Naive thymus-derived CD4-positive, alpha-beta T cell (primary cell): ENCODE measurements at regions of chr6 and their contacts with region 1.

Region 1: DNA sequence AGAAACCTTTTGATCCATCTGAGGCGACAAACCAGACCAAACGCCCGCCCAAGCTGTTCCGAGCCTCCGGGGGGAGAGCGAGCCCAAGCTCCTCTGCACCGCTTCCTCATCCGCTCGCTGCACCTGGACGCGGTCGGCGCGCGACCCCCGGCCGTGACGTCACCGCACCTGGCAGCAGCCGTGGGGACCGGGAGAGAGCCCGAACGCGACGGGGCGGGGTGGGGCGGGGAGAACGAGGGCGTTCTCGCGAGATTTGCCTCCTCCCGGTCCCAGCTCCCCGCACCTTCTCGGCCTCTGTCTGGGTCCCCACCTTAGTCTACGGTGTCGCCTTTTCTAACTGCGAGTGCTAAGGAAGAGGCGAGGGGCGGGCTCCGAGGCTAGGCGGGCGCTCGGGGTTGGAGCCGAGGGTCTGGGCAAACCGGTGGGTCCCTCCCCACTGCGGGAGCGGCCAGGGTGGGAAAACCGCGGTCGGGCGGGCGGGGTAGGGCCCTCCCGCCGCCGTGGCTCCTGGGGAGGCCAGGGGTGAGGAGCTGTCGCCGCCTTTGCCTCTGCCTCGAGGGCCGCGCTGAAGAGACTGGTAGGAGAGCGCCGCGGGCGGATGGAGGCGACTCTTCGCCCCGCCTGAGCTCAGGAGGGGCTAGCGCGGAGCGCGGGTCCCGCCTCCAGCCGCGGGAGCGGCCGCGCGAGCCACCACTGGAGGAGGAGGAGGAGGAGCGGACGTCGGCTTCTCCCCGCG is at the start of gene CD2AP:
- DNase-seq: peak; percentile 72 to 91 (median 88)
- ATAC-seq: peak; percentile 90
- H3K4me3 ChIP-seq: peak within 1 kb of the TSS; percentile 82
- H3K4me3 Mint-ChIP-seq: peak within 1 kb of the TSS; percentile 95 to 100 (median 98)
- H3K27ac ChIP-seq: peak within 1 kb of the TSS; percentile 92
- H3K27ac Mint-ChIP-seq: peak within 1 kb of the TSS; percentile 96 to 100 (median 98)
- H3K4me1 ChIP-seq: peaks cover 11 to 19% of the 10 kb centered on the region in 2 donors
- H3K4me1 Mint-ChIP-seq: peaks cover 23 to 55% (median 47%) of the 10 kb centered on the region in 7 donors
- H3K27me3 ChIP-seq: no peaks in the 10 kb centered on the region
- H3K27me3 Mint-ChIP-seq: peaks cover 0 to 3% (median 0%) of the 10 kb centered on the region in 5 donors
- total RNA-seq, gene CD2AP: 21.8 to 37.0 (median 27.9) TPM

Region 2: DNA sequence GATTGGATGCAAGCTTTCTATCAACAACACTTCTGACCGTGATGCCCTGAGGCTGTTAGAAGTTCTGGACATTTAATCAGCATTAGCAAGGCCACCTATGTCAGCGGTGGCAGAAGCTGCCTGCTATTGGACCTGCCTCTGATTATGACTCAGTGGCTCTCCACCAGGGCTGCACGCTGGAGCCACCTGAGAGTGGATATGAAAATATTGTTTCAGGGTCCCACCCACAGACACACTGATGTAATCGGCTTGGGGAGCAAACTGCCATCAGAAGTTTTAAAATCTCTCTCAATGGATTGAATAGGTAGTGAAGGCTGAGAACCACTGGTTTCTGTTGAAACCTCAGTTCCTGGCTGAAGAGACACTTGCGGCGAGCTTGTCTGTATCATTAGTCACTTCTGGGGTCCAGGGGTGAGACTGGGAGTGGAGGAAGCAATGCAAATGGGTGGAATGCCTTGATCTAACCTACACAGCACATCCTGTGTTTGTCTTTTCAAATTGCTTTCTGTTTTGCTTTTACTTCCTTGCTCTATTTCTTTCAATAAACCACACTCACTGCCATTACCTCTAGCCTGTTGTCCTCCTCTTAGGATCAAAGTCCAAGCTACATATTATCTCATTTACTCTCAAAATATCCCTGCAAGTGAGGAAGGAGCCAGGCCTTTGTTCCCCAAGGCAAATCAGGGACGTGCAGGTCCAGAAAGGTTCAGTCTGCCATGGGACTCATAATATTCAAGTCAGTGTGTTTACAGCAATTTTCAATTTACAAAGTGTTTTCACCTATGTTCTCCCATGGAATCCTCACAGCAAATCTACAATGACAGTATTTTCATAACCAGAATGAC is 1466.2 kb before region 1 on chr6:
- CTCF ChIA-PET with region 1: no interaction called
- POLR2A ChIA-PET with region 1: no interaction called
- intact Hi-C with region 1: loop called in 1 of 2 experiments (anchors 5 kb)
- DNase-seq: peak in 8 of 9 donors; percentile 35 to 69 (median 58)
- ATAC-seq: peak; percentile 88
- H3K4me3 ChIP-seq: peak overlapping the region; percentile 45
- H3K4me3 Mint-ChIP-seq: peak overlapping the region; percentile 68 to 82 (median 78)
- H3K27ac ChIP-seq: peak overlapping the region; percentile 64
- H3K27ac Mint-ChIP-seq: peak overlapping the region; percentile 85 to 98 (median 92)
- H3K4me1 ChIP-seq: peaks cover 37 to 43% of the 10 kb centered on the region in 2 donors
- H3K4me1 Mint-ChIP-seq: peaks cover 37 to 62% (median 60%) of the 10 kb centered on the region in 7 donors
- H3K27me3 ChIP-seq: no peaks in the 10 kb centered on the region
- H3K27me3 Mint-ChIP-seq: peaks cover 0 to 14% (median 1%) of the 10 kb centered on the region in 5 donors

Region 3: DNA sequence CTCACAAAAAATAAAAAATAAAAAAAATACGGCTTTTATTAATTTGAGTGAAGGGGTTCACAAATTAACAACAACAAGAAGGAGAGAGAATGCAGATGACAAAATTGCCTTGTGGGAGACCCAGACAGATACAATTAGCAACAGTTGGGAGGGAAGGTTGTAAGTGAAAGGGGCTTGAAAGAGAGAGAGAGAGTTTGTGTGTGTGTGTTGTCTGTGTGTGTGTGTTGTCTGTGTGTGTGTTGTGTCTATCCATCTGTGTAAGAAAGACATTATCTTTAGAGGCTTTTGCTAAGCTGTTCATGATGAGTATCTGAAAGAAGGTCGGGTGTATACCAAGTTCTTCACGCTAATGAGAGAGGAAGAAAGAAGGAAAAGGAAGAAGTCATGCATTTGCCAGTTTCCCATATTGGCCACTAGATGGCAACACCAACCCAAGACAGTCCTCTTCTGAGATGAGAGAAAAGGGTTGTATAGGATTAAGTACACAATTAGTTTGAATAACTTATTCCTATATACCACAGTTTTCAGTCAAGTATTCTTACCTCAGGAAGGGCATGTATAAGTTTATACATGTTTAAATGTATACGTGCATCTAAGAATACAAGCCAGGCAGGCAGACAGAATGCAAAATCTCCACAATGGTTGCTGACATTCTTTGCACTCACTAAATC is 63.8 kb before region 1 on chr6:
- CTCF ChIA-PET with region 1: interaction called, 11 read pairs
- POLR2A ChIA-PET with region 1: interaction called, 19 read pairs
- intact Hi-C with region 1: loop called (anchors 1 kb)
- DNase-seq: peak in 7 of 9 donors; percentile 25 to 70 (median 62)
- ATAC-seq: peak; percentile 94
- H3K4me3 ChIP-seq: peak overlapping the region; percentile 57
- H3K4me3 Mint-ChIP-seq: peak overlapping the region; percentile 76 to 94 (median 84)
- H3K27ac ChIP-seq: peak overlapping the region; percentile 54
- H3K27ac Mint-ChIP-seq: peak overlapping the region; percentile 28 to 90 (median 86)
- H3K4me1 ChIP-seq: peaks cover 3 to 8% of the 10 kb centered on the region in 2 donors
- H3K4me1 Mint-ChIP-seq: peaks cover 6 to 29% (median 16%) of the 10 kb centered on the region in 7 donors
- H3K27me3 ChIP-seq: no peaks in the 10 kb centered on the region
- H3K27me3 Mint-ChIP-seq: peaks cover 0 to 11% (median 0%) of the 10 kb centered on the region in 5 donors

Region 4: DNA sequence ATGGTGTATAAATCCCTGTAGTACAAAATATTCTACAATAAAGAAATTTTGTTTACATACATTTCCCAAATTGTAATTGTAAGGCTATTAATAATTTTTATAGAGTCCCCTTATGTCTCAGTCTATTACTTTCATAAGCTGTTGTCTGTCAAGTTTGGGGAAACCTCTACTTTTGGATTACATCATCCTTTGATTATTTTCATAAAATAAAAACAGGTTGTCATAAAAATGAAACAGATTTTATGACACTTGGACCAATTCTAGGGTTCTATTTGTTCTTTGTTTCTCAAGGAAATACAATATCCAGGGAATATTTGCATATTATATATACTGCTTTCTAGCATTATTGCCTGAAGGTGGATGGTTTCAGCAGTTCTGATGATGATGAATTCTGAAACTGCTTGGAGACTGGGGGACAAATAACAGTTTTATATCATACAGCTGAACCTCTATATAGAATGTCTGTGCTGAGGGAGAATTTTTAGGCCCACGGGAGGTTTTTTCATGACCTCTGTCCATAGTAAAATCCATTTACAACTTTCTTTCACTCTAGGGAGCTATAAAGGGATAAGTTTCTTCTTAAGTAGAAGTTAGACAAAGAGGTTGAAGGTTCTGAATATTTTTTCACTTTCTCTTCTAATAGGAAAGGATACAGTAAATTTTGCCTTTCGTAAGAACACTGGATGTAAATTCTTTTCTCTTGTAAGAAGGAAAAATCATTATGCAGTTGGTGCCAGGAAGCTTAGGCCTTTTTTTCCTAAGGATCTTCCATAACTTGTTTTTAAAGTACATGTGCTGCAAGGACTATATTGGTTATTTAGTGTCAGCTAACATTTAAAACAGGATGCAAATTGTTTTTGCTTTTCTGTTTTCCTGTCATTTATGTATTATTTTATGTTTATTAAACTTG is 57.9 kb after region 1 on chr6:
- CTCF ChIA-PET with region 1: no interaction called
- POLR2A ChIA-PET with region 1: no interaction called
- intact Hi-C with region 1: loop called in 1 of 2 experiments (anchors 5 kb)
- DNase-seq: no peak
- ATAC-seq: no peak
- H3K4me3 ChIP-seq: no peak overlapping the region
- H3K4me3 Mint-ChIP-seq: no peak overlapping the region
- H3K27ac ChIP-seq: no peak overlapping the region
- H3K27ac Mint-ChIP-seq: no peak overlapping the region
- H3K4me1 ChIP-seq: no peaks in the 10 kb centered on the region
- H3K4me1 Mint-ChIP-seq: peaks cover 3 to 16% (median 13%) of the 10 kb centered on the region in 7 donors
- H3K27me3 ChIP-seq: no peaks in the 10 kb centered on the region
- H3K27me3 Mint-ChIP-seq: no peaks in the 10 kb centered on the region

Region 5: GRCh38 chr6:47631269-47631772 is 153.7 kb after region 1 on chr6:
- CTCF ChIA-PET with region 1: no interaction called
- POLR2A ChIA-PET with region 1: interaction called, 4 read pairs
- intact Hi-C with region 1: loop called (anchors 5 kb)
- DNase-seq: peak in 6 of 9 donors; percentile 20 to 60 (median 53)
- ATAC-seq: peak; percentile 64
- H3K4me3 ChIP-seq: no peak overlapping the region
- H3K4me3 Mint-ChIP-seq: no peak overlapping the region
- H3K27ac ChIP-seq: no peak overlapping the region
- H3K27ac Mint-ChIP-seq: peak overlapping the region in 8 of 9 donors; percentile 10 to 75 (median 48)
- H3K4me1 ChIP-seq: peaks cover 6 to 9% of the 10 kb centered on the region in 2 donors
- H3K4me1 Mint-ChIP-seq: peaks cover 7 to 28% (median 20%) of the 10 kb centered on the region in 7 donors
- H3K27me3 ChIP-seq: no peaks in the 10 kb centered on the region
- H3K27me3 Mint-ChIP-seq: no peaks in the 10 kb centered on the region

Region 6: DNA sequence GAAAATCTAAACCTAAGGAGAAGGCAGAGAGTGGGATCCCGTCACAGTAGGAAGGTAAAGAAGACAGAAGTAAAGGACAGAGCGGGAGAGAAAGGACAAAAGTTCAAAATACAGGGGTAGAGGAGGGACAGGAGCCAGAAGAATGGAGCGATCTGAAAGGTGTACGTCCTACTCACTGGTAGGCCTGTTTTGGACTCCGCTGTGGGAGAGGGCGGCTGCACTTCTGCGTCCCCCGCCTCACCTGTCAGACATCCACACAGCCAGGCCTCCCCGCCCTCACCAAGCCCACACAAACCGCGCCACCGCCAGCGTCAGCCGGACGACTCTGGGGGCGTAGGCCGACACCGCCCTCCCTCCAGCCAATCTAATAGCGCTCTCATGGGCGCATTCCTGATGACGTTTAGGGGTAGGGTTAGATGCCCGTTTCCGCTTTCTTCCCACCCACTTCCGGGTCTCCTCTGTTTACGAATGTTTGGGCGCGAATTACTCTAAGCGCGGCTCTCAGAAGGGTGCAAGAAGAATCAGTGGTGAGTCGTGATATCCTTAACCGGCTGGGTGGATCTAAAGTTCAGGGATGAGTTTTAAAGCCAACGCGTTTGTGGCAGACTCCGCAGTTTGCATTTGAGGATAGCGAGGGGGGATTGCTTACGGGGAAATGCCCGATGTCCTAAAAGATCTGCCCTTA is 1985.4 kb after region 1 on chr6 and contains the starts of genes CENPQ and MMUT:
- CTCF ChIA-PET with region 1: no interaction called
- POLR2A ChIA-PET with region 1: no interaction called
- intact Hi-C with region 1: loop called (anchors 1 to 5 kb)
- DNase-seq: peak; percentile 85 to 94 (median 92)
- ATAC-seq: peak; percentile 99
- H3K4me3 ChIP-seq: peak within 1 kb of the TSS; percentile 68
- H3K4me3 Mint-ChIP-seq: peak within 1 kb of the TSS; percentile 94 to 100 (median 98)
- H3K27ac ChIP-seq: peak within 1 kb of the TSS; percentile 85
- H3K27ac Mint-ChIP-seq: peak within 1 kb of the TSS; percentile 91 to 99 (median 96)
- H3K4me1 ChIP-seq: peaks cover 14 to 15% of the 10 kb centered on the region in 2 donors
- H3K4me1 Mint-ChIP-seq: peaks cover 43 to 80% (median 57%) of the 10 kb centered on the region in 7 donors
- H3K27me3 ChIP-seq: no peaks in the 10 kb centered on the region
- H3K27me3 Mint-ChIP-seq: no peaks in the 10 kb centered on the region
- total RNA-seq, gene CENPQ: 1.2 to 11.4 (median 5.0) TPM
- total RNA-seq, gene MMUT: 6.5 to 15.4 (median 12.5) TPM